Endothelial cell of umbilical vein (primary cell): ENCODE measurements at regions of chr6 and their contacts with region 1.

Region 1: GRCh38 chr6:42166444-42167141 is 6.6 kb upstream of the GUCA1A start:
- DNase-seq: peak; percentile 72
- H3K4me3 ChIP-seq: no peak overlapping the region
- H3K27ac ChIP-seq: no peak overlapping the region
- H3K4me1 ChIP-seq: no peaks in the 10 kb centered on the region
- H3K27me3 ChIP-seq: peaks cover 0 to 4% of the 10 kb centered on the region in 2 experiments
- CTCF ChIP-seq: peak; percentile 82 to 91
- POLR2A ChIP-seq: no peak

Region 2: DNA sequence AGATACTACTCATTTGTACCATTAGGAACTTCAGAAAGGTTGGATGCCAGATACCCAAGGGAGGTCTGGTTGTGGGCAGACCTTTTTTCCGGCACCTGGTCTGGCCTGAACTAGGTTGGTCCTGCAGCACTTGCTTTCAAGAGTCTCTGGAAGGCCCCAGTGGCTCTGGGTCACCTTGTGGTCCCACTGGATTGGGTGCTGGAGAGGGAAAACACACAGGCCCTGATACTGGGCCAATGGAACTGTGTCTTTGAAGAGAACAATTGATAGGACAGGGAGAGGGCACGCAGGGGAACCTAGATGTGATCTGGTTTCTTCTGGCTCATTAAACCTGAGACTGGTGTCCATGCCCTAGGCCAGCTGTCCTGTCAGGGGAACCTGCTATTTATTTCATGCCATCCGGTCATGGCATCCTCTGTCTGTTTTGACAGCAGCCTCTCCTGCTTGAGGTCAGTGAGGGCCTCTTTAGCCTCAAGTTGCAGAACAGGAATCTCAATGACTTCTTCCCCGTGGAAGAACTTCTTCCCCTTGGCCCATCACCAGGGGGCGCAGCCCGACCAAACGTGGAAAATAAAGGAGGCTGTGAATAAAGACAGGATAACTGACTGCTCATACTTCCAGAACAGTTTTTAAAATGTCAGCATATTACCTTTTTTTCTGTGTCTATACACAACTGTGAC is 91.3 kb before region 1 on chr6:
- CTCF ChIA-PET with region 1: interaction called, 33 read pairs
- POLR2A ChIA-PET with region 1: no interaction called
- dilution Hi-C with region 1: no loop called
- intact Hi-C with region 1: loop called (anchors 1 kb)
- DNase-seq: peak; percentile 72
- H3K4me3 ChIP-seq: no peak overlapping the region
- H3K27ac ChIP-seq: no peak overlapping the region
- H3K4me1 ChIP-seq: no peaks in the 10 kb centered on the region
- H3K27me3 ChIP-seq: no peaks in the 10 kb centered on the region
- CTCF ChIP-seq: peak; percentile 77 to 84
- POLR2A ChIP-seq: peak; percentile 10

Region 3: GRCh38 chr6:42086046-42087035 is 80.3 kb before region 1 on chr6:
- CTCF ChIA-PET with region 1: interaction called, 11 read pairs
- POLR2A ChIA-PET with region 1: no interaction called
- dilution Hi-C with region 1: no loop called
- intact Hi-C with region 1: no loop called
- DNase-seq: peak; percentile 73
- H3K4me3 ChIP-seq: no peak overlapping the region
- H3K27ac ChIP-seq: no peak overlapping the region
- H3K4me1 ChIP-seq: peaks cover 5% of the 10 kb centered on the region
- H3K27me3 ChIP-seq: no peaks in the 10 kb centered on the region
- CTCF ChIP-seq: peak; percentile 31 to 51
- POLR2A ChIP-seq: no peak

Region 4: DNA sequence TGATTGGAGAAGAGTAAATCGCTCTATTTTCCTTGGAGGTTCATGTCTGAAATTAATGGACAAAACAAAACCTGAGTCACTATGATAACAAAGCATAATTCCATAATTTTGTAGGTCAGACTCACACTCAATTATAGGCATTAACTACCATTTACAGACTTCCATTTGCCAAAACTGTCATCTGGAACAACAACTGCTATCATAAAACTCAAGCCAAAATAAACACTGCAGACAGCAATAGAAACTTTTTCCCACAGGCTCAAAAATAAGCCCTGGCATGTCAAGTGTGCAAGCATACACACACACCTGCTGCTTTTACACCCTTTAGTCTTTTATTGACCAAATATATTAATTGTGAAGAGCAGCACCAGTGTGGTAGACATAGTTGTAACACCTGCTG is 44.0 kb after region 1 on chr6:
- CTCF ChIA-PET with region 1: interaction called, 26 read pairs
- POLR2A ChIA-PET with region 1: no interaction called
- dilution Hi-C with region 1: no loop called
- intact Hi-C with region 1: loop called (anchors 5 kb)
- DNase-seq: peak; percentile 92
- H3K4me3 ChIP-seq: no peak overlapping the region
- H3K27ac ChIP-seq: peak overlapping the region; percentile 60
- H3K4me1 ChIP-seq: peaks cover 10% of the 10 kb centered on the region
- H3K27me3 ChIP-seq: no peaks in the 10 kb centered on the region
- CTCF ChIP-seq: no peak
- POLR2A ChIP-seq: no peak